ENCODE measurements at regions of chr17 and their contacts with region 1.

Region 1: GRCh38 chr17:45218895-45219661 is 2.6 kb upstream of the FMNL1 start:
- DNase-seq: peak; percentile 79 to 95 (median 89)
- ATAC-seq: peak; percentile 45
- H3K4me3 ChIP-seq: peak overlapping the region in 1 of 2 experiments; percentile 1
- H3K4me3 Mint-ChIP-seq: peak overlapping the region; percentile 91
- H3K27ac ChIP-seq: no peak overlapping the region
- H3K27ac Mint-ChIP-seq: peak overlapping the region; percentile 90
- H3K4me1 ChIP-seq: peaks cover 25% of the 10 kb centered on the region
- H3K4me1 Mint-ChIP-seq: peaks cover 37% of the 10 kb centered on the region
- H3K27me3 ChIP-seq: no peaks in the 10 kb centered on the region
- H3K27me3 Mint-ChIP-seq: no peaks in the 10 kb centered on the region
- CTCF ChIP-seq: peak; percentile 96

Region 2: DNA sequence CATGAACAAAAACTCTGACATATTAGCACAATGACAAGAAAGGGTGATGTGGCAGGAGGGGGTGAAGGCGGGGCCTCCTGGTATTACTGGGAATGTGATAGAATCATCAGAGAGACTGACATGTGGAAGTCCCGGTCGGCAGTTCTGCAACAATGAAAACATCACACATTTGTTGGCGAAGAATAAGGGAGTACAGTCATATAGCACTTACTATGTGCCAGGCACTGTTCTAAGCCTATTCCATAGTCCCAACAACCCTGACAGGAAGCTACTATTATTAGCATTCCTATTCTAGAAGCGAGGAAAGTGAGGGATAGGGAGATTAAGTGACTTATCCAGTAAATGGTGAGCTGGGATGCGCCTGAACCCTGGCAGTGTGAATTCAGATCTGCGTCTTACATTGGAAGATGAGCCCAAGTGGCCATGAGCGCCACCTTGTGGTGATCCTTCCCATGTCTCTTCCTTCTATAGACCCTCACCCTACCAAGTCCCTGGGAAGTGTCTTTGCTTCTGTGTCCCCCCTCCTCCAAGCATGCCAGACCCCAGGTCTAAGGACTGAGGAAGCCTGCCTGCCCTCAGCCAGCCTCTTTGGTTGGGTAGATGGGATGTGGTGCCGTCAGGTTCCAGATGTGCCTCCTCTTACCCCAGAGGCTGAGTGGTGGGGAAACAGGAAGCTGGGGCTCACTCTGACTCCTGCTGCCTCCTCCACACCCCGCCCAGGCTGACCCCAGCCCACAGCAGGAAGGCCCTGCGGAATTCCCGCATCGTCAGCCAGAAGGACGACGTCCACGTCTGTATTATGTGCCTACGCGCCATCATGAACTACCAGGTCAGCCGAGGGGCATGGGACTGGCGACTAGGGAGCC is 16.6 kb after region 1 on chr17:
- CTCF ChIA-PET with region 1: interaction called, 1,097 read pairs
- POLR2A ChIA-PET with region 1: interaction called, 98 read pairs
- intact Hi-C with region 1: loop called (anchors 1 kb)
- DNase-seq: peak; percentile 62 to 90 (median 83)
- ATAC-seq: peak; percentile 62
- H3K4me3 ChIP-seq: no peak overlapping the region
- H3K4me3 Mint-ChIP-seq: no peak overlapping the region
- H3K27ac ChIP-seq: peak overlapping the region in 1 of 2 experiments; percentile 60
- H3K27ac Mint-ChIP-seq: peak overlapping the region; percentile 66
- H3K4me1 ChIP-seq: peaks cover 45% of the 10 kb centered on the region
- H3K4me1 Mint-ChIP-seq: peaks cover 51% of the 10 kb centered on the region
- H3K27me3 ChIP-seq: no peaks in the 10 kb centered on the region
- H3K27me3 Mint-ChIP-seq: no peaks in the 10 kb centered on the region
- CTCF ChIP-seq: peak; percentile 71

Region 3: DNA sequence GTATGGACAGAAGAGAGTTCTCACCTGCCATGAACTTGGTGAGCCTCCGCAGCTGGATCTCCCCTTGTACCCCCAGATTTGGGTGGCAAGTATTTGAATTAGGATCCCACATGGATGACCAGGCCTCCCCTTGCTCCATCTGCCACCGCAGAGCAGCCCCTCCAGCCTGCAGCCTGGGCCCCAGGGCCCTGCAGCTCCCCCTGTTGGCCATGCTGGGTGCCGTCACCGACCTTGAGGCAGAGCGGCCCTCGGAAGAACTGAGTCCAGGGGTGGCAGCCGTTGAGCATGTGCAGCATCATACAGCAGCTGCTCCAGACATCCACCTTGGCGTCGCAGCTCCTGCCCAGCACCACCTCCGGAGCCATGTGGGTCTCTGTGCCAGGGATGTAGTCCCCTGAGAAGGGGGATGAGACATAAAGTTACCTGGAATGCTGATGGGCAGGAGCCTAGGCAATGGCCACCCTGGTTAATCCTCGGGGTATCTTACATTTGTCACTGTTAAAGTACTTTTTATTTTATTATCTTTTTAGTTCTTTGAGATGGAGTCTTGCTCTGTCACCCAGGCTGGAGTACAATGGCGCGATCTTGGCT is 51.8 kb after region 1 on chr17:
- CTCF ChIA-PET with region 1: interaction called, 206 read pairs
- POLR2A ChIA-PET with region 1: interaction called, 5 read pairs
- intact Hi-C with region 1: loop called (anchors 1 kb)
- DNase-seq: peak; percentile 21 to 75 (median 58)
- ATAC-seq: peak; percentile 95
- H3K4me3 ChIP-seq: no peak overlapping the region
- H3K4me3 Mint-ChIP-seq: no peak overlapping the region
- H3K27ac ChIP-seq: no peak overlapping the region
- H3K27ac Mint-ChIP-seq: peak overlapping the region; percentile 27
- H3K4me1 ChIP-seq: no peaks in the 10 kb centered on the region
- H3K4me1 Mint-ChIP-seq: peaks cover 6% of the 10 kb centered on the region
- H3K27me3 ChIP-seq: no peaks in the 10 kb centered on the region
- H3K27me3 Mint-ChIP-seq: no peaks in the 10 kb centered on the region
- CTCF ChIP-seq: peak; percentile 84

Region 4: DNA sequence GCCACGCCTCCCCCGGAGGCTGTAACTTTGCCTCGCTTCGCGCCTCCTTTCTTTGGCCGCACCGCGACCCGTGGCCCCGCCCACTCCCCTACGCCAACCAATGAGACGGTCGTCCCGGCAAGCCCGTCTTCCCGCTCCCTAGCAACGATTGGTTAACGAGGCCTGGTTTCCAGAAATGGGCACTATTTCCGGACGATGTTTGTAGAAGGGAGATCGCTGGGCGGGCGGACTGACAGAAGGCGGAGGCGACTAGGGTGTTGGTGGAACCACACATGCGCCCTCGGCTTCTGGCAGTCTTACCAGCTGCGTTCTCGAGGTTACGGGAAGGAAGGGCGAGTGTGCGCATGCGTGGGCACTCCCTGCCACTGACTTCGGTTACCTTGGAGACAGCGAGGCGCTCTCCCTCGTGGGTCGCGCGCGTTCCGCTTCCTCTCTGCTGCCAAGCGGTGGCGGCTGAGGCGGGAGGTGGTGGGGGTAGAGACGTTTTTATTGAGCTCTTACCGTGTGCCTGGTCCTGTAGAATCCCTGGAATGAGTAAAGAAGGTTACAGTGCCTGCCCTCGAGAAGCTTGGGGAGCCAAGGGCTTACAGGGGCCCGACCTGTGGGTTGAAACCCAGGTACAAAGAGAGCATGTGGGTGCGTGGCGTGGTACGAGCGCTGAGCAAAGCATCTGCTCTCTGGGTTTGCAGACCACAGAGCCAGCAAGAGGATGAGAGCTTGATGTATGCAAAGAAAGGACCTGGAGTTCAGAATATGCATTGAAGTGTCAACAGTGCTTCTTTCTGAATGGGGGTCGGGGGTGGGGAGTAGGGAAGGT is 98.2 kb after region 1 on chr17:
- CTCF ChIA-PET with region 1: interaction called, 34 read pairs
- POLR2A ChIA-PET with region 1: interaction called, 6 read pairs
- intact Hi-C with region 1: loop called (anchors 1 to 2 kb)
- DNase-seq: peak; percentile 99 to 100 (median 100)
- ATAC-seq: peak; percentile 81
- H3K4me3 ChIP-seq: peak overlapping the region; percentile 55 to 81
- H3K4me3 Mint-ChIP-seq: peak overlapping the region; percentile 95
- H3K27ac ChIP-seq: peak overlapping the region; percentile 75 to 81
- H3K27ac Mint-ChIP-seq: peak overlapping the region; percentile 94
- H3K4me1 ChIP-seq: peaks cover 78% of the 10 kb centered on the region
- H3K4me1 Mint-ChIP-seq: peaks cover 80% of the 10 kb centered on the region
- H3K27me3 ChIP-seq: no peaks in the 10 kb centered on the region
- H3K27me3 Mint-ChIP-seq: no peaks in the 10 kb centered on the region
- CTCF ChIP-seq: no peak

Measured in CD8-positive, alpha-beta T cell (primary cell).